IMR-90 (cell line): ENCODE measurements at regions of chr3 and their contacts with region 1.

Region 1: GRCh38 chr3:31610700-31611275 is 78.1 kb downstream of the STT3B start:
- DNase-seq: peak; percentile 66
- ATAC-seq: peak; percentile 55
- H3K4me3 ChIP-seq: no peak overlapping the region
- H3K27ac ChIP-seq: no peak overlapping the region
- H3K4me1 ChIP-seq: no peaks in the 10 kb centered on the region
- H3K27me3 ChIP-seq: no peaks in the 10 kb centered on the region
- CTCF ChIP-seq: peak; percentile 76
- POLR2A ChIP-seq: no peak
- RAD21 ChIP-seq: peak; percentile 71

Region 2: DNA sequence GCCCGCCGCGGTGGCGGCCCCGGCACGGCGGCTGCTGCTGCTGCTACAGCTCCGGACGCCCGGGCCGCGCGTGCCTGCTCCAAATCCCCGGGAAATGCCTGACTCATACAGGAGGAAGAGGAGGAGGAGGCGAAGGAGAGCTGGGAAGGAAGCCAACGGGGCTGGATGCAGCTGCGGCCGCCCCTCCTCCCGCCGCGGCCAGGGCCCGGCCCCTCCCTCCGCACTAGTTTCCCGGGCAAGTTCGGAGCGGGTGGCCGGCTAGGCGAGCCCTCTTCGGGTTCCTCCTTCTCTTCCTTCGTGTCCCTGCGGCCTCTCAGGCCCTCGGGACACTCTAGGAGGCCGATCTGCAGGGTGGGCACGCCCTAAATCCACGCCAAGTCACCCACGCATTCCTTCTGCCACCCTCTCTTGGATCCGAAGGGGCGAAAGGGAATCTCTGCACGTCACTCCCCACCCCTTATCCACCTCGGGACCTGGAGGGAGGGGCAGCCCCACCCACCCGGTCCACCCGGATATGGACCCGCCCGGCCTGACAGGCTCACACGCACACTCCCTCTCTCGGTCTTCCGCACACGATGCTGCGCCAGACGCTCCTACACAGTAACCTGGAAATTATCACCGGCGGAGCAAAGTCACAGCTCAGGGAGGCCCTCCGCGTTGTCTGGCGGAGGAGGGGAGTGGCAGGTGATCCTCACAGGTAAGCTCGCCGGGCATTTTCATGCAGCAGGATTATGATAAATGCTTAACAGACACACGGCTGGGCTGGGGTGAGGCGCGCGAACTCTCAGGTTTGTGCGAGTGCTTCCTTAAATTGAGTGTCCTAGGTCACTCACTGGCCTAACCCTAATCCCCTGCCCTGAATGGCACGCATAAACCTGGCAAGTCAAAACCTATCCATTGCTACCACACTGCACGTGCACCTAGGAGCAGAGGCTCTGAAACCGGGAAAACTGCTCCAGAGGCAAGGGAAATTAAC is 370.7 kb after region 1 on chr3 and contains the starts of genes OSBPL10 and ZNF860:
- CTCF ChIA-PET with region 1: no interaction called
- POLR2A ChIA-PET with region 1: no interaction called
- dilution Hi-C with region 1: no loop called
- in situ Hi-C with region 1: no loop called
- intact Hi-C with region 1: loop called (anchors 10 kb)
- DNase-seq: peak; percentile 92
- ATAC-seq: peak; percentile 87
- H3K4me3 ChIP-seq: peak within 1 kb of the TSS; percentile 87
- H3K27ac ChIP-seq: peak within 1 kb of the TSS; percentile 63
- H3K4me1 ChIP-seq: no peaks in the 10 kb centered on the region; the same call in 1 of the 2 replicates
- H3K27me3 ChIP-seq: no peaks in the 10 kb centered on the region
- CTCF ChIP-seq: no peak
- POLR2A ChIP-seq: peak; percentile 59
- RAD21 ChIP-seq: no peak
- total RNA-seq, gene OSBPL10: 7.2 and 9.5 TPM in 2 replicates
- total RNA-seq, gene ZNF860: 0.18 and 0.56 TPM in 2 replicates

Region 3: GRCh38 chr3:32018757-32019564 is 408.2 kb after region 1 on chr3:
- CTCF ChIA-PET with region 1: interaction called, 3 read pairs
- POLR2A ChIA-PET with region 1: no interaction called
- dilution Hi-C with region 1: no loop called
- in situ Hi-C with region 1: no loop called
- intact Hi-C with region 1: loop called (anchors 5 kb)
- DNase-seq: peak; percentile 57
- ATAC-seq: peak; percentile 88
- H3K4me3 ChIP-seq: no peak overlapping the region
- H3K27ac ChIP-seq: peak overlapping the region; percentile 21; the same call in 1 of the 2 replicates
- H3K4me1 ChIP-seq: peaks cover 5% of the 10 kb centered on the region; the same call in 1 of the 2 replicates
- H3K27me3 ChIP-seq: peaks cover 2% of the 10 kb centered on the region; the same call in 1 of the 2 replicates
- CTCF ChIP-seq: peak; percentile 66
- POLR2A ChIP-seq: no peak
- RAD21 ChIP-seq: peak; percentile 58